Left cardiac atrium (tissue), 4 donors: ENCODE measurements at regions of chr10 and their contacts with region 1.

Region 1: GRCh38 chr10:61188691-61189090 is 244.7 kb upstream of the RHOBTB1 start:
- DNase-seq: no peak
- ATAC-seq: no peak

Region 2: GRCh38 chr10:61135276-61135721 is 53.4 kb before region 1 on chr10:
- intact Hi-C with region 1: loop called (anchors 5 kb)
- DNase-seq: no peak
- ATAC-seq: no peak

Region 3: GRCh38 chr10:61140765-61141392 is 47.8 kb before region 1 on chr10:
- intact Hi-C with region 1: loop called (anchors 5 kb)
- DNase-seq: no peak
- ATAC-seq: peak; percentile 74 to 75